ENCODE measurements at regions of chr18 and their contacts with region 1.

Region 1: DNA sequence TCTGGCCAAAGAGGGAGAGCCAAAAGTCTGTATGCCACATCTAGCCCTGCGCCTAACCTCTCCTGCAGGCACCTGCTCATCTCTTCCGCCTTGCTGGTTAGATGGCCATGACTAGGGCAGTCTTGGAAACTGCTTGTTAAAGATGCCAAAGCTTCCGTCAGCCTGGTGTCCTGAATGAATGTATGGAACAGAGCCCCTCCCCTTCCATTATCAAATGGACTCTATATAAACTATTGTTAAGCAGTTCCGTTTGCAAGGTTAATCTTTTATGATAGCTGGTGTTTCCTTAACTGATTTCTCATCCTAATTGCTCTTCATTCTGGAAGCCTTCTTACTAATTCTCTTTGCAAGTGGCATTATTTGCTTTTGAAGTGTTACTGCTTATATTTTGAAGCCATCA is 87.1 kb downstream of the ATP9B start:
- DNase-seq: no peak
- ATAC-seq: no peak
- H3K4me3 ChIP-seq: no peak overlapping the region
- H3K4me3 Mint-ChIP-seq: no peak overlapping the region
- H3K27ac ChIP-seq: peak overlapping the region; percentile 35
- H3K27ac Mint-ChIP-seq: peak overlapping the region; percentile 25 to 41
- H3K4me1 ChIP-seq: peaks cover 0 to 9% of the 10 kb centered on the region in 2 experiments
- H3K4me1 Mint-ChIP-seq: peaks cover 8 to 12% (median 9%) of the 10 kb centered on the region in 3 donors
- H3K27me3 ChIP-seq: no peaks in the 10 kb centered on the region
- H3K27me3 Mint-ChIP-seq: no peaks in the 10 kb centered on the region

Region 2: DNA sequence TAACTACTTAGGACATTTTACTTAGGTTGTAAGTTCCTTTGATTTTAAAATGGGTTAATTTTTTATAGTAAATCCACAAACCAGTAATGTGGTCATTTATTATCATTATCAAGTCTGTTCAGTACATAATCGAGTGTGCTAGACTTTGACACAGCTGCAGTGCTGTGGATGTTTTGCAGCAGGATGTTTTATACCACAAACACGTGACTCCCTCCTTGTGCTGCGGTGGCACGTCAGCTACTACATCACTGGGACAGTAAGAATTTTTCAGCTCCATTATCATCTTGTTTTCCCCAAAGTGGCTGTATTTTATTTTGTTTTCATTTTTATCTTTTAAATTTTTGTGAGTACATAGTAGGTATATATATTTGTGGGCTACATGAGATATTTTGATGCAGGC is 17.1 kb before region 1 on chr18:
- CTCF ChIA-PET with region 1: interaction called in 1 of 2 experiments, 10 read pairs
- POLR2A ChIA-PET with region 1: no interaction called
- DNase-seq: peak in 32 of 35 experiments; percentile 9 to 68 (median 30)
- ATAC-seq: peak; percentile 81 to 91 (median 82)
- H3K4me3 ChIP-seq: no peak overlapping the region
- H3K4me3 Mint-ChIP-seq: no peak overlapping the region
- H3K27ac ChIP-seq: no peak overlapping the region
- H3K27ac Mint-ChIP-seq: peak overlapping the region in 1 of 2 donors; percentile 22
- H3K4me1 ChIP-seq: peaks cover 0 to 6% of the 10 kb centered on the region in 2 experiments
- H3K4me1 Mint-ChIP-seq: peaks cover under 1 to 28% (median 21%) of the 10 kb centered on the region in 3 donors
- H3K27me3 ChIP-seq: no peaks in the 10 kb centered on the region
- H3K27me3 Mint-ChIP-seq: no peaks in the 10 kb centered on the region

Measured in T-cell (primary cell).